Activated CD8-positive, alpha-beta T cell treated with anti-CD3 and anti-CD28 coated beads, Interleukin-2, amount 10 ng/mL, durations not matched to agents 7 days and 5 days (primary cell): ENCODE measurements at regions of chr16 and their contacts with region 1.

Region 1: DNA sequence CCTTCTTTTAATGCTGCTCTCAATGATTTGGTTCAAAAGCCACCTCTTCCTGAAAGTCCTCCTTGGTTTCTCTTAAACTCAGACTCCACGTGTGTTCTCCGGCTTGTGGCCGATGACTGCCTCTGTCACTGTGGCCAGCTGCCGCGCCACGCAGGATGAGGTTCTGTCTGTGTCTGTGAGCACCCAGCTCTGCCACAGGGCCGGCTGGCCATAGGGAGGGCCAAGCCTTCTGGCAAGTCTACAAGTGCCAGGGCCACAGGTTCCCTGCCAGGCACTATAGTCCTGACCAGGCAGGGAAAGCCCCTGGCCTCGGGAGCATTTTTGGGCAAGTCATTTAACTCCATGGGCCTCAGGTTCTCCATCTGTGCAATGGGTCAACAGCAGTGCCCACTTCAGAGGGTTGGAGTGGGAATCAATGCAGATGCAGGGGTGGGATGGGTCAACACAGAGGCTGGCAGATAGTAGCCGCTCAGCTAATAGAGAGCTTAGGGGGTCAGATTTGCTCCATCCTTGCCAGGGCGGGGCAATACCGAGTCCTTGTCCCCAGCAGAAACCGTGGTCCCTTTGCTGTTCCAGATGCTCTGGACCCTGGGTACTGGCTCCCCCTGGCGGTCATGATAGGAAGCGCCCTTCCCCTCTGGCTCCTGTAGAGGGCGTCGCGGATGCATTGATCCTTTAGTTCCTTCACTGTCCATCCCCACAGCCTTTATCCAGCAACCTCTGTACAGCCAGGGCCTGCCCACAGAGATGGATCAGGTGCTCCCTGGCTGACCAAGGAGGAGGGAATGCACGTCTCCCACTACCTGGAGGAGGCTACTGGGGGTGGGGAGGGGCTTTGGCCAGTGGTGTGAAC is 19.3 kb upstream of the ADGRG3 start:
- DNase-seq: peak; percentile 93
- ATAC-seq: peak; percentile 67
- H3K4me3 Mint-ChIP-seq: no peak overlapping the region
- H3K27ac Mint-ChIP-seq: peak overlapping the region; percentile 82
- H3K4me1 Mint-ChIP-seq: peaks cover 59% of the 10 kb centered on the region
- H3K27me3 Mint-ChIP-seq: no peaks in the 10 kb centered on the region

Region 2: GRCh38 chr16:57374067-57374534 is 274.7 kb before region 1 on chr16:
- CTCF ChIA-PET with region 1: no interaction called
- POLR2A ChIA-PET with region 1: no interaction called
- DNase-seq: no peak
- ATAC-seq: no peak
- H3K4me3 Mint-ChIP-seq: no peak overlapping the region
- H3K27ac Mint-ChIP-seq: no peak overlapping the region
- H3K4me1 Mint-ChIP-seq: peaks cover 10% of the 10 kb centered on the region
- H3K27me3 Mint-ChIP-seq: peaks cover 4% of the 10 kb centered on the region

Region 3: DNA sequence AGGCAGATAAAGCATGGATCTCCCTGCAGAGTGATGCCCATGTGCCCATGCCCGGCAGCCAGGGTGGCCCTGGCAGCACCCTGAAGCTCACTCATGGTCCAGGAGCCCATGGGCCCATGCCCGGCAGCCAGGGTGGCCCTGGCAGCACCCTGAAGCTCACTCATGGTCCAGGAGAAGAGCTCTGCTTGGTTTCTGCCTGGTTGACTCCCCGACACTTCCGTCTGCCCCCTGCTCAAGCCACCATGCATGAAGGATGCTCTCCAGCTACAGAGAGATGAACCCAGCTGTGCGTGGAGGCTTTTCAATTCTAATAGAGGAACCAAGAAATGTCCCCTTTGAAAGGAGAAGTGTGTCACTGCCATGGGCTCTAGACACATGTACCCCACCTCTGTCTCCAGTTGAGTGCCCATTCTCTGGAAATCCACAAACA is 235.5 kb before region 1 on chr16:
- CTCF ChIA-PET with region 1: no interaction called
- POLR2A ChIA-PET with region 1: no interaction called
- DNase-seq: no peak
- ATAC-seq: no peak
- H3K4me3 Mint-ChIP-seq: no peak overlapping the region
- H3K27ac Mint-ChIP-seq: no peak overlapping the region
- H3K4me1 Mint-ChIP-seq: peaks cover 15% of the 10 kb centered on the region
- H3K27me3 Mint-ChIP-seq: no peaks in the 10 kb centered on the region

Region 4: GRCh38 chr16:57544119-57544653 is 104.6 kb before region 1 on chr16:
- CTCF ChIA-PET with region 1: interaction called, 12 read pairs
- POLR2A ChIA-PET with region 1: interaction called, 3 read pairs
- DNase-seq: peak; percentile 24
- ATAC-seq: no peak
- H3K4me3 Mint-ChIP-seq: peak overlapping the region; percentile 85
- H3K27ac Mint-ChIP-seq: peak overlapping the region; percentile 84
- H3K4me1 Mint-ChIP-seq: peaks cover 68% of the 10 kb centered on the region
- H3K27me3 Mint-ChIP-seq: no peaks in the 10 kb centered on the region

Region 5: DNA sequence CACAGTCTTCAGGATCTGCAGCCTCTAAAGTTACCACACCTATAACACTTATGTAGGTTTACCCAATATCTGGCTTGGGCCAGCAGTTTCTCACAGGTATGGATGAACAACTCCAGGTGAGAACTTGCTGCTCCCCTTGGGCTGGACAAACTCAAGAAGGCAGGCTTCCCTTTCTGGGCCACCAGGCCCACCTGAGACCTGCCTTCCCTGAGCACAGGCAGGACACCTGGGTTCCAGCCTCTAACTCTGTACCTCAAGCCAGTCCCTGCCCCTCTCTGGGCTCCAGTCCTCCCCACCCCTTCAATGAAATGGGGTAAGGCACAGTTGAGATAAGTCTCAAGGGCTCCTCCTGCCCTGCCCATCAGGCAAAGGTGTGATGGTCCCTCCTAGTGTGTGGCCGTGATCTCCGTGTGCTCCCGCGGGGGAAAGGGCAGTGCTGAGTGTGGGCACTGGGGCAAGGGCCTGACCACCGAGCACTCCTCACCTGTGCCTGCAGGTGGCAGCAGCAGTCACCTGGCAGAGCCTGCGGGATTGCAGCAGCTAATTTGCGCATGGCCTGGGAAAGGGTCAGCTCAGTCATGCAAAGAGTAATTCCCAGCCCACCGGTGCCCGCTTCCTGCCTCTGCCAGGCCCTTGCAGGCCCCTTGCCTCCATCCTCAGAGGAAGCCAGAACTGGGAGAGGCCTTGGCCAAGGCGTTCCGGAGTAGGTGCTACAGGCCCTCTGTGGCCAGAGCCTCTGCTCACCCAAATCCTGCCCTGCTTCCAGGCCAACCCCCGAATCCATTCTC is 48.6 kb before region 1 on chr16:
- CTCF ChIA-PET with region 1: interaction called, 128 read pairs
- POLR2A ChIA-PET with region 1: interaction called, 10 read pairs
- DNase-seq: peak; percentile 44
- ATAC-seq: peak; percentile 16
- H3K4me3 Mint-ChIP-seq: peak overlapping the region; percentile 8
- H3K27ac Mint-ChIP-seq: peak overlapping the region; percentile 99
- H3K4me1 Mint-ChIP-seq: peaks cover 67% of the 10 kb centered on the region
- H3K27me3 Mint-ChIP-seq: no peaks in the 10 kb centered on the region

Region 6: DNA sequence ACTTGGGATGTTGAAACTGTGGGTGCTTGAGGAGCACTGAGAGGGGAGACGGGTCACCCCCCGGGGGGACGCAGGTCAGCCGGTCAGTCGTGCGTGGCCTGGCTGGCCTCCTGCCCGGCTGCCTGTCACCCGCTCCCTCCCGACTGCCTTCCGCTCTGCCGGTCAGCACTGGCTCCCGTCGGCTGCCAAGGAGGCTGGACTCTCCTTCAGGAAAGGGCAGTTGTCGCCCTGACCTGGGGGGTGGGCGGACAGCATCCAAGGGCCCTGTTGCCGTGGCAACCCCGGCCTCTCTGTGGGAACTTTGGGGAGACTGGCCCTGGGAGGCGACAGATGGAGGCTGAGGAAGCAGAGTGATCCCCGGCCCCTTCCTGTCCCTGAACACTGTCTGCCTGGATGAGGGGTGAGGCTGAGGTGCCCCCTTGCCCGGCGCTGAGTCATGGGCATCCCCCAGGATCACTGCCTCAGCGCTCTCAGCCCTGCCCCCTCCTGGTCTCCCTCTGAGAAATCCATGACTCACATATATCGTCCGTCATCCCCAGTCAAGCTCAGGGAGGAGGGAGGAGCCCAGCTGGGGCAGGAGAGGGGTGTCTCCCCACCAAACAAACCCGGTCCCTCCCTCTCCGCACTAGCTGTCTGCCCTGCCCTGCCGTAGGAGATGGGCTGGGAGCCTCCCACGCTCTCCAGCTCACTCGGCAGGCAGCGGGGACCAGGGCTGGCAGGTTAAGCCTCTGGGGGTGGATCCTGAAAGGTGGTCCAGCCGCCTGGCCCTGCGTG is 20.6 kb before region 1 on chr16 and contains the start of gene ADGRG1:
- CTCF ChIA-PET with region 1: interaction called, 14 read pairs
- POLR2A ChIA-PET with region 1: no interaction called
- DNase-seq: peak; percentile 57
- ATAC-seq: peak; percentile 74
- H3K4me3 Mint-ChIP-seq: peak within 1 kb of the TSS; percentile 34
- H3K27ac Mint-ChIP-seq: peak within 1 kb of the TSS; percentile 54
- H3K4me1 Mint-ChIP-seq: peaks cover 24% of the 10 kb centered on the region
- H3K27me3 Mint-ChIP-seq: peaks cover 18% of the 10 kb centered on the region
- total RNA-seq, gene ADGRG1: 3.3 to 3.7 TPM

Region 7: DNA sequence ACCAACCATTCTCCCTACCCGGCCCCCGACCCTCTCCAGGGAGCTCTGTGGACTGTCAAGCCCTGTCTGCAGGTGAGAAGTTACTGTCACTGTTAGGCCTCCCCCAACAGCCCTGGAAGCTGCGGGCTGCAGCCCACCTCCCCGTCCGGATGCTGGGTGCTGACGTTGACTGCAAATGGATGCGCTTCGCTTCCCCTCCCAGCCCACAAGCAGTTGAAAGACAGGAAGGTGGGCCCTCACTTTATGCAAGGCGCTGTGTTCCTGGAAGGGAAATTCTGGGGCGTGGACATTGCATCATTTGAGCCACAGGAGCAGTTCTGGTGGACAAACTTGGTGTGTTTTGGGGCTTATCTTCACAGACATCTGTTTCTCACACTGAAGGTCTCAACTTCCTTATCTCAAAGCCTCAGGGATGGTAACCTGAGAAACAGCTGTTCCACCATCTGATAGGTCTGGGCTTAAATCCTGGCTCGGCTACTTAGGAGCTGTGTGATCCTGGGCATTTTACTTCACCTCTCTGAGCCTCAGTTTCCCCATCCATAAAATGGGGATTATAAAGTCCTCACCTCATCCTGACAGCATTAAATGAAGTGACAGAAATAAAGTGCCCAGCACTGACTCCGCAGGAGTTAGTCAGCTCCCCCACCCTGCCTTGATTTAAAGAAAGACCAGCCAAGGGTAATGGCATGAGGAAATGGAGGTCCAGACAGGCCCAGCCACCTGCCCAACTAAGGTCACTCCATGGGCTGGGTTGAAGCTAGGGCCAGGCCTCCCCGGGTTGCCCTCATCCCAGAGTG is 41.1 kb after region 1 on chr16:
- CTCF ChIA-PET with region 1: no interaction called
- POLR2A ChIA-PET with region 1: no interaction called
- DNase-seq: peak; percentile 83
- ATAC-seq: peak; percentile 87
- H3K4me3 Mint-ChIP-seq: peak overlapping the region; percentile 72
- H3K27ac Mint-ChIP-seq: peak overlapping the region; percentile 93
- H3K4me1 Mint-ChIP-seq: peaks cover 59% of the 10 kb centered on the region
- H3K27me3 Mint-ChIP-seq: no peaks in the 10 kb centered on the region

Region 8: GRCh38 chr16:57757326-57757786 is 108.5 kb after region 1 on chr16:
- CTCF ChIA-PET with region 1: interaction called, 10 read pairs
- POLR2A ChIA-PET with region 1: no interaction called
- DNase-seq: peak; percentile 91
- ATAC-seq: peak; percentile 94
- H3K4me3 Mint-ChIP-seq: no peak overlapping the region
- H3K27ac Mint-ChIP-seq: no peak overlapping the region
- H3K4me1 Mint-ChIP-seq: peaks cover 2% of the 10 kb centered on the region
- H3K27me3 Mint-ChIP-seq: no peaks in the 10 kb centered on the region